K562 (cell line): ENCODE measurements at regions of chr1 and their contacts with region 1.

Region 1: GRCh38 chr1:12619792-12620487 is 1.9 kb upstream of the DHRS3 start:
- DNase-seq: peak; percentile 83 to 92 (median 84)
- ATAC-seq: peak; percentile 67
- H3K4me3 ChIP-seq: peak overlapping the region; percentile 71
- H3K27ac ChIP-seq: peak overlapping the region; percentile 94
- H3K4me1 ChIP-seq: peaks cover 19 to 40% of the 10 kb centered on the region in 2 experiments
- H3K27me3 ChIP-seq: no peaks in the 10 kb centered on the region
- CTCF ChIP-seq: peak; percentile 95 to 99 (median 98)
- EP300 ChIP-seq: peak; percentile 31; the same call in 1 of the 2 replicates
- POLR2A ChIP-seq: no peak
- RAD21 ChIP-seq: peak; percentile 98 to 99

Region 2: GRCh38 chr1:12314333-12314903 is 305.5 kb before region 1 on chr1:
- CTCF ChIA-PET with region 1: interaction called, 7 read pairs
- POLR2A ChIA-PET with region 1: interaction called, 3 read pairs
- in situ Hi-C with region 1: loop called (anchors 25 kb)
- intact Hi-C with region 1: loop called (anchors 1 kb)
- DNase-seq: peak in 2 of 4 experiments; percentile 25 to 29
- ATAC-seq: peak; percentile 70
- H3K4me3 ChIP-seq: no peak overlapping the region
- H3K27ac ChIP-seq: no peak overlapping the region
- H3K4me1 ChIP-seq: 0 out of 5 replicates have a peak, but pooled peaks cover 0 to 2% of the 10 kb centered on the region in 2 experiments
- H3K27me3 ChIP-seq: no peaks in the 10 kb centered on the region
- CTCF ChIP-seq: peak; percentile 36 to 61 (median 54); a peak in 5 of 6 replicates
- EP300 ChIP-seq: no peak
- POLR2A ChIP-seq: no peak
- RAD21 ChIP-seq: peak; percentile 64 to 76

Region 3: GRCh38 chr1:12407050-12407961 is 212.6 kb before region 1 on chr1:
- CTCF ChIA-PET with region 1: interaction called, 30 read pairs
- POLR2A ChIA-PET with region 1: interaction called, 4 read pairs
- in situ Hi-C with region 1: loop called (anchors 5 kb)
- intact Hi-C with region 1: loop called (anchors 1 kb)
- DNase-seq: peak; percentile 39 to 81 (median 60)
- ATAC-seq: peak; percentile 87
- H3K4me3 ChIP-seq: no peak overlapping the region
- H3K27ac ChIP-seq: peak overlapping the region; percentile 60
- H3K4me1 ChIP-seq: peaks cover 11 to 33% of the 10 kb centered on the region in 2 experiments; a peak in 4 of 5 replicates
- H3K27me3 ChIP-seq: no peaks in the 10 kb centered on the region
- CTCF ChIP-seq: peak; percentile 47 to 76 (median 60); a peak in 5 of 6 replicates
- EP300 ChIP-seq: no peak; the same call in 1 of the 2 replicates
- POLR2A ChIP-seq: no peak
- RAD21 ChIP-seq: peak; percentile 83 to 89

Region 4: DNA sequence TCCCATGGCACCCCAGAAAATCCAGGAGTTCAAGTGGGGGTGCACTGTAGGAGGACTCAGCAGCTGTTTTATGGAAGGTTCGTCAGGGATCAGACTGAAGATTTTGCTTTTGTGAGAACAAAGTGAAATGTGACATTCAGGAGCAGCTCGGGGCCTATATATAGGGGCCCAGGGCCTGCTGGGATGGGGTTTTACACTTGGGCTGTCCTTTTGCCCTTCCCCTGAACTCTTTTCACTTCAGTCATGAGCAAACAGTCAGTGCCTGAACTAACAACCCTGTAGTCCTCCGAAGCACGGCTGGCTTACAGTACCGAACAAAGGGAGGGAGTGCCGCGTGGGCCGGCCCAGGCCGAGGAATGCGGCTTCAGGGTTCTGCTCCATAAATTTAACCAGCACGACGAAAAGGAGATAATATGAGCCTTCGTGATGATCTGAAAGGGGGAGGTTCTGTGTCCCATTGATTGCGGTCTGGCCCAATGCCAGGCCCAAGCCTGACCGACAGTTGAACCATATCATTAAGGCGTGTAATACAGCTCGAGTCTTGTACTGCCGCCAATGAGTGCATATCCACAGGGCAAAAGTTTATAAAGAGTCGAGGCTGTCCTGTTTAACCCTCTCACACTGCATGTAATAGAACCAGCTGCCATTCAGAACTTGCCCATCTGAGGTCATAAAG is 141.9 kb before region 1 on chr1:
- CTCF ChIA-PET with region 1: no interaction called
- POLR2A ChIA-PET with region 1: interaction called, 7 read pairs
- in situ Hi-C with region 1: no loop called
- intact Hi-C with region 1: loop called (anchors 5 kb)
- DNase-seq: peak; percentile 86 to 99 (median 90)
- ATAC-seq: peak; percentile 86
- H3K4me3 ChIP-seq: no peak overlapping the region; the same call in 1 of the 2 replicates
- H3K27ac ChIP-seq: peak overlapping the region; percentile 92
- H3K4me1 ChIP-seq: peaks cover 48 to 92% of the 10 kb centered on the region in 2 experiments
- H3K27me3 ChIP-seq: no peaks in the 10 kb centered on the region
- CTCF ChIP-seq: no peak
- EP300 ChIP-seq: peak; percentile 94
- POLR2A ChIP-seq: peak; percentile 71
- RAD21 ChIP-seq: peak in 1 of 2 experiments; percentile 63; a peak in 3 of 4 replicates

Region 5: DNA sequence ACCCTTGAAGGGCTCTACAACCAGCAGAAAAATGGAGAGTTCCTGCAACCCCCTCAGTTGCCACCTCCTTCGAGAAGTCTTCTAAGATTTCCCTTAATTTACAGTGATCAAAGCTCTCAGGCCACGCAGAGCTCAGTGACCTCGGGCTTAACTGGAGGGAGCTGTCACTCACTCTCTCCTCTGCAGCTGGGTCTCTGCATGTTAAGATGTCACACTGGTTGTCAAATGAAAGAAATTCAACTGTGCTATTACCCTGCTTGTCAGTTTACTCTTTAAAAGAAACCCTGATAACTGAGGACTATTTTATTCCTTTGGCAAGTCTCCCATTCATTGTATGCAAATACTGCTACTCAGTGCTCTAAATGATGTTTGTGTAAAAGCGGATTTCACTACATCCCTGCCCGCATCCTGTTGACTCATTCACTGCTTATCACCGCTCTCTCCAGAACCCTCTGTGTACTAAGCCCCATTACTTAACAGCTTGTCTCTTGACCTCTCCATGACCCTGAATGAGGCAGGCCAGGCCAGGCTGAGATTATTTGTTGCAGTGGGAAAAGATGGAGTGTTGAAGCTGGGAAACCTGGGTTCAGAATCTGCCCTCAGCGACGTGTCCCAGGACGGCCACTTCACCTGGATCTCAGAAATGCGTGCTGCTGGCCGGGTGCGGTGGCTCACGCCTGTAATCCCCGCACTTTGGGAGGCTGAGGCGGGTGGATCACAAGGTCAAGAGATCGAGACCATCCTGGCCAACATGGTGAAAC is 15.6 kb before region 1 on chr1:
- CTCF ChIA-PET with region 1: interaction called, 6 read pairs
- POLR2A ChIA-PET with region 1: interaction called, 24 read pairs
- in situ Hi-C with region 1: no loop called
- intact Hi-C with region 1: loop called (anchors 1 kb)
- DNase-seq: peak; percentile 91 to 97 (median 94)
- ATAC-seq: peak; percentile 91
- H3K4me3 ChIP-seq: no peak overlapping the region
- H3K27ac ChIP-seq: peak overlapping the region; percentile 81
- H3K4me1 ChIP-seq: peaks cover 38 to 43% of the 10 kb centered on the region in 2 experiments
- H3K27me3 ChIP-seq: no peaks in the 10 kb centered on the region
- CTCF ChIP-seq: 0 out of 6 replicates have a peak, but pooled peaks of 1 of the 3 experiments have one; percentile 8
- EP300 ChIP-seq: peak; percentile 99
- POLR2A ChIP-seq: no peak
- RAD21 ChIP-seq: peak; percentile 19 to 34; a peak in 3 of 4 replicates

Region 6: DNA sequence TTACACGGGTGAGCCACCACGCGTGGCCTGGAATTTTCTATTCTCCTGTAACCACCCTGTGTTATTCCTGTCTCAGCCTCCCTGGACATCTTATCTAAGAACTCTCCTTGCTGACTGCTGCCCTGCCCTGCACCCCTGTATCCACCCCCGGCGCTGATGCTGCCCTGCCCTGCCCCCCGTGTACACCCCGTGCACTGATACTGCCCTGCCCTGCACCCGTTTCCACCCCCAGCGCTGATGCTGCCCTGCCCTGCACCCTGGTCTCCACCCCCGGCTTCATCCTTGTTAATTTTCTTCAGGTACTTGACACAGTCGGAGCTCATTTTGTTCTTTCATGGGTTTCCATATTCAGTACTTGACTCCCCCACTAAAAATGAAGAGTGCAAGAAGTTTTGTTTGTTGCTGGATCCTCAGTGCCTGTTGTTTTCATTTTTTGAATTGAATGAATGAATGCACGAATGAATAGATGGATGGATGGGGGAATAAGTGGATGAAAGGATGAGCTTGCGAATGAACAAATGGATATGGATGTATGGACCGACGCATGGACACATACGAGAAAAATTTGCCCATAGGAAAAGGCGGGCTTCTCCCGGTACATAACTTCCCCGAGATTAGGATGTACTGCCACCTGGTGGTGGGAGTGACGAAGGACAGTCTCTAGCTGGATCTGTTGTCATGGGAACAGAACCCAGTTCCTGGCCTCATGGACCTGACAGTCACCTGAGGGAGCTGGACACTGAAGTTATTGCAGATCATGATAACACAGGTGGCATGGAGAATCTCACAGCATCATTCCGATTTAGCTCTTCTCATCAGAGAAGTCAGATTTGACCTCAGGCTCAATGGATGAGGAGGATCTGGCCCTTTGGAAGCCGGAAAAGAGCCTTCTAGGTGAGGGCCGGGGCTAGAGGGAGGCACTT is 38.9 kb after region 1 on chr1:
- CTCF ChIA-PET with region 1: no interaction called
- POLR2A ChIA-PET with region 1: interaction called, 4 read pairs
- in situ Hi-C with region 1: no loop called
- intact Hi-C with region 1: loop called (anchors 1 kb)
- DNase-seq: peak; percentile 94 to 98 (median 96)
- ATAC-seq: peak; percentile 74
- H3K4me3 ChIP-seq: no peak overlapping the region
- H3K27ac ChIP-seq: no peak overlapping the region
- H3K4me1 ChIP-seq: peaks cover 10 to 18% of the 10 kb centered on the region in 2 experiments
- H3K27me3 ChIP-seq: no peaks in the 10 kb centered on the region
- CTCF ChIP-seq: peak; percentile 90 to 98 (median 98)
- EP300 ChIP-seq: no peak
- POLR2A ChIP-seq: no peak
- RAD21 ChIP-seq: peak; percentile 90 to 97

Region 7: GRCh38 chr1:12739613-12740012 is 119.7 kb after region 1 on chr1:
- CTCF ChIA-PET with region 1: no interaction called
- POLR2A ChIA-PET with region 1: no interaction called
- in situ Hi-C with region 1: no loop called
- intact Hi-C with region 1: no loop called
- DNase-seq: no peak
- ATAC-seq: no peak
- H3K4me3 ChIP-seq: no peak overlapping the region
- H3K27ac ChIP-seq: no peak overlapping the region
- H3K4me1 ChIP-seq: no peaks in the 10 kb centered on the region
- H3K27me3 ChIP-seq: no peaks in the 10 kb centered on the region
- CTCF ChIP-seq: no peak
- EP300 ChIP-seq: no peak
- POLR2A ChIP-seq: no peak
- RAD21 ChIP-seq: no peak

Region 8: DNA sequence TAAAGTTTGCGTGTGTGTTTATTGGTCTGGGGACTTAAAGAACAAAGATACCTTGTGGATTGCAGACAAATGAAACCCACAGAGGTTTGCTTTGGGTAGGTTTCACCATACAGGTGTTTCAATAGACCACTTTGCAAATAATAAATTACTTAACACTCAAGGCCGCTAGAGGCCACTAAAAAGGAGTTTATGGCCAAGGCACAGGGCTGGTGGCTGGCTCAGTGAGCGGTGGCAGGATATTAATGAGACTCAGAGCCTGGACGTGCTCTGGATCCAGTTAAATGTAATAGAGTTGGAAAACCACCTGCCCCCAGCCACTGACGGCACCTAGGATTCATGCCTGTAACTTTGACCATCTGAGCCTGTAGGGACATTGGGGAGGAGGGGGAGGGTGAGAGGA is 849.4 kb after region 1 on chr1:
- CTCF ChIA-PET with region 1: no interaction called
- POLR2A ChIA-PET with region 1: no interaction called
- in situ Hi-C with region 1: no loop called
- intact Hi-C with region 1: no loop called
- DNase-seq: peak; percentile 19 to 34 (median 22)
- ATAC-seq: peak; percentile 71
- H3K4me3 ChIP-seq: no peak overlapping the region
- H3K27ac ChIP-seq: no peak overlapping the region
- H3K4me1 ChIP-seq: no peaks in the 10 kb centered on the region
- H3K27me3 ChIP-seq: peaks cover 0 to 19% of the 10 kb centered on the region in 2 experiments; a peak in 1 of 5 replicates
- CTCF ChIP-seq: peak; percentile 23 to 39 (median 28); a peak in 3 of 6 replicates
- EP300 ChIP-seq: no peak
- POLR2A ChIP-seq: no peak
- RAD21 ChIP-seq: peak in 1 of 2 experiments; percentile 24; a peak in 1 of 4 replicates